PC-3 (cell line): ENCODE measurements at regions of chr7 and their contacts with region 1.

Region 1: DNA sequence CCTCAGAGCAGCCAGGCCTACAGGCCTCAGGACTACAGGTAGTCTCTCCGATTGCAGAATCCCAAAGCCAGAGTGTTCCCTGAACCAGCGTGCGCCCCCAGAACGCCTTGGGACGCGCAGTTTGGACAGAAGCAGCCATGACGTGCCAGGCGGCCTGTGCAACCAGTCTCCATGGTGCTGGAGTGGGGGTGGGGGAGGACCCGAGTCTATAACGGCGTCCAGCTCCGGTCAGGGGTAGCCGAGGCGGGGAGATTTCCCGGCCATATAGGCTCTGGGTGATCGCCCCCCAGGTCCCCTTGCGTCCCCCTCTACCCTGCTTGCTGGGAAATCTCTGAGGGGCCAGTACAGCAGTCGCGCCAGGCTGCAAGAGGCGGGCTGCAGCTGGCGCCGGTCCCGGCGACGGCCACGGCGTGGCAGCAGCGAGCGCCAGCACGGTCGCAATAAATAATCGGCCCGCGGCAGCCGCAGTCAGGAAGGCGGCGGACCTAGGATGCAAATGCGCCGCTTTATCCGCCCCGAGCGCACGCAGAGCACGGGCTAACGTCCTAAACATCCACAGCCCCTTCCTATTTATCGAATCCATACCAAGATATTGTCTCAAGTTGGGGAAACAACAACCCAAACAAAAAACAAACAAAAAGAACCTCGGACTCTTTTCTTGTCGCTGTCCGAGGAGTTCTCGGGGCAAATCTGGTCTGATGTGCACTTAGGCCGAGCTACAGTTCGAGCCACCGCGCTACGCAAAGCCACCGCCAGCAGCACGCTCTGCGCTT is 1.6 kb downstream of the HOXA3 start:
- DNase-seq: peak; percentile 86
- ATAC-seq: peak; percentile 33
- H3K4me3 ChIP-seq: peak overlapping the region; percentile 78
- H3K27ac ChIP-seq: peak overlapping the region; percentile 84
- H3K4me1 ChIP-seq: peaks cover 34% of the 10 kb centered on the region
- H3K27me3 ChIP-seq: no peaks in the 10 kb centered on the region
- CTCF ChIP-seq: peak; percentile 82

Region 2: GRCh38 chr7:26853788-26854393 is 296.9 kb before region 1 on chr7:
- CTCF ChIA-PET with region 1: no interaction called
- POLR2A ChIA-PET with region 1: no interaction called
- intact Hi-C with region 1: loop called (anchors 2 kb)
- DNase-seq: peak; percentile 73
- ATAC-seq: peak; percentile 92
- H3K4me3 ChIP-seq: no peak overlapping the region
- H3K27ac ChIP-seq: no peak overlapping the region
- H3K4me1 ChIP-seq: peaks cover 8% of the 10 kb centered on the region; the same call in 1 of the 2 replicates
- H3K27me3 ChIP-seq: no peaks in the 10 kb centered on the region
- CTCF ChIP-seq: peak; percentile 77

Region 3: GRCh38 chr7:27112955-27113949 is 37.5 kb before region 1 on chr7:
- CTCF ChIA-PET with region 1: no interaction called
- POLR2A ChIA-PET with region 1: interaction called, 4 read pairs
- intact Hi-C with region 1: loop called (anchors 1 kb)
- DNase-seq: peak; percentile 84
- ATAC-seq: peak; percentile 31
- H3K4me3 ChIP-seq: peak overlapping the region; percentile 99
- H3K27ac ChIP-seq: peak overlapping the region; percentile 99
- H3K4me1 ChIP-seq: peaks cover 59% of the 10 kb centered on the region
- H3K27me3 ChIP-seq: no peaks in the 10 kb centered on the region
- CTCF ChIP-seq: no peak

Region 4: DNA sequence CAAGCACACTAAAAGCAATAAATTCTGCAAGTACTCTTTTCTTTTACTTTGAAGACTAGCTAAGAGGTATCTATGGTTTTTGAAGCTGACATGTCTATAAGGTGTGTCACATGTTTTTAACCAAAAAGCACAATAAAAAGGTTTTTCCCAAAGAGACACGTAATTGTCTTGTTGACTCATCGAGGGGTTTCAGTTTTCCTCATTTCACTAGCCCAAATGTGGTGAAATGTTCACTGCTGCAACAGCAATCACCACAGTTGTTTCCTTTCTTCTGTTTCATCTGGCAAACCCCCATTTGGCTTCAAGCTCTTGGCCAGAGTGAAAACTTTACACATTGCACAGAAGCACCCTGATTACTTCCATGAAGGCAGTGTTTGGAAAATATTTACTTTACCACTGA is 16.4 kb before region 1 on chr7:
- CTCF ChIA-PET with region 1: interaction called, 3 read pairs
- POLR2A ChIA-PET with region 1: interaction called, 12 read pairs
- intact Hi-C with region 1: loop called (anchors 1 kb)
- DNase-seq: peak; percentile 89
- ATAC-seq: peak; percentile 53
- H3K4me3 ChIP-seq: no peak overlapping the region
- H3K27ac ChIP-seq: peak overlapping the region; percentile 87
- H3K4me1 ChIP-seq: peaks cover 45% of the 10 kb centered on the region
- H3K27me3 ChIP-seq: no peaks in the 10 kb centered on the region
- CTCF ChIP-seq: no peak

Region 5: GRCh38 chr7:27793780-27794179 is 643.0 kb after region 1 on chr7:
- CTCF ChIA-PET with region 1: no interaction called
- POLR2A ChIA-PET with region 1: no interaction called
- intact Hi-C with region 1: no loop called
- DNase-seq: peak; percentile 52
- ATAC-seq: peak; percentile 73
- H3K4me3 ChIP-seq: no peak overlapping the region
- H3K27ac ChIP-seq: no peak overlapping the region
- H3K4me1 ChIP-seq: peaks cover 7% of the 10 kb centered on the region
- H3K27me3 ChIP-seq: no peaks in the 10 kb centered on the region
- CTCF ChIP-seq: no peak